HCT116 (cell line): ENCODE measurements at regions of chr7 and their contacts with region 1.

Region 1: GRCh38 chr7:36487756-36488336 is 98.2 kb downstream of the ANLN start:
- DNase-seq: peak; percentile 59
- ATAC-seq: peak; percentile 67
- H3K4me3 ChIP-seq: no peak overlapping the region
- H3K27ac ChIP-seq: no peak overlapping the region
- H3K4me1 ChIP-seq: no peaks in the 10 kb centered on the region
- H3K27me3 ChIP-seq: no peaks in the 10 kb centered on the region
- CTCF ChIP-seq: peak; percentile 70 to 83 (median 82)
- POLR2A ChIP-seq: no peak
- RAD21 ChIP-seq: peak; percentile 93

Region 2: GRCh38 chr7:35584990-35585389 is 902.9 kb before region 1 on chr7:
- CTCF ChIA-PET with region 1: no interaction called
- POLR2A ChIA-PET with region 1: no interaction called
- RAD21 ChIA-PET with region 1: no interaction called
- intact Hi-C with region 1: no loop called
- DNase-seq: no peak
- ATAC-seq: no peak
- H3K4me3 ChIP-seq: no peak overlapping the region
- H3K27ac ChIP-seq: no peak overlapping the region
- H3K4me1 ChIP-seq: no peaks in the 10 kb centered on the region
- H3K27me3 ChIP-seq: no peaks in the 10 kb centered on the region
- CTCF ChIP-seq: no peak
- POLR2A ChIP-seq: no peak
- RAD21 ChIP-seq: no peak

Region 3: DNA sequence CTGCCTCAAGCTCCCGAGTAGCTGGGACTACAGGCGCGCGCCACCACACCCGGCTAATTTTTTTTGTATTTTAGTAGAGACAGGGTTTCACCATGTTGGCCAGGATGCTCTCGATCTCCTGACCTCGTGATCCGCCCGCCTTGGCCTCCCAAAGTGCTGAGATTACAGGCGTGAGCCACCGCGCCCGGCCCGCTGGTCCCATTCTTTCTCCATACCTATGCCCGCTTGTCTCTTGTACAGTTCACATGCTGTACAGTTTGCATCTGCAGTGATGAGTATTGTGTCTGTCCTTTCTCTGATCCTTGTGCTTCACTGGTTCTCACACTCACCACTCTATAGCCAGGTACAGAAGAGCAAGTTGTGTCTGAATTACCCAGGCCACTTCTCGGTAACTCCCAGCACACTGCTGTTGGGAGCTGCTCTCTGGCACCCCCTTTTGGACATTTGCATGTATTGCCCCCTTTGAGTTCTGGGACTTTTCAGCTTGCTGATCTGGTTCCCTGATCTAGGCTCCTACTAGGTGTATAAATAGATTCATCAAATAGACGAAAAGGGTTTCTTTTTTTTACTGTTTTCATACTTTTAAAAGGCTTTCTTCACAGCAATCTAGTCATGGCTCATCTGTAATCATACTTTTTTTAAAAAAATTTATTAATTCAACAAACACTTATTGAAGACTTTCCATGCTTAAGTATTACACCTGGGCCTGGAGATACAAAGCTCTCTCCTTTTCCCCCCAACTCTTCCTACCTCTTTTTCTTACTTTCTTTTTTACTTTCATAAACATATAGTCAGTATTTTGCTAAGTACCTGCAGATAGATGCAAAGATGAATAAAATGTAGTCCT is 183.0 kb after region 1 on chr7:
- CTCF ChIA-PET with region 1: interaction called, 25 read pairs
- POLR2A ChIA-PET with region 1: interaction called, 5 read pairs
- RAD21 ChIA-PET with region 1: interaction called, 6 to 11 read pairs
- intact Hi-C with region 1: loop called (anchors 1 kb)
- DNase-seq: peak; percentile 60
- ATAC-seq: peak; percentile 92
- H3K4me3 ChIP-seq: no peak overlapping the region
- H3K27ac ChIP-seq: no peak overlapping the region
- H3K4me1 ChIP-seq: peaks cover 5 to 21% of the 10 kb centered on the region in 2 experiments
- H3K27me3 ChIP-seq: no peaks in the 10 kb centered on the region
- CTCF ChIP-seq: peak; percentile 75 to 96 (median 91)
- POLR2A ChIP-seq: no peak
- RAD21 ChIP-seq: peak; percentile 84

Region 4: DNA sequence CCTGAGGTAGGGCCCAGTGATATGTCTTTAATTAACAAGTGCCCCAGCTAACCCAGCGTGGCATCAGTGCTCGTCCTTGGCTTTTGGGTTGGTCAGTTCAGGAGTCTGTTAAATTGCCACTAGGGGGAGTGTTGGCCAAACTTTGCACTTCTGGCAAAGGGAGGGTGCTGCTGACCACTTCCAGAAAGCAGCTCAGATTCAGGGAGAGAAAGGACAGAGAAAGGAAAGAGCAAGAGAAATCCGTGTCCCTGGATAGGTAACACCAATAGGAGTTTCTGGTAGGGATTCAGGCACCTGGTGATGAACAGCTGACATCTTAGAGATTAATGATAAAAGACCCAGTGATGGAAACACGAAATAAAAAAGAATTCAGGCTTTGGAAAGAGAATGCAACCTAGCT is 479.5 kb after region 1 on chr7:
- CTCF ChIA-PET with region 1: interaction called, 21 read pairs
- POLR2A ChIA-PET with region 1: no interaction called
- RAD21 ChIA-PET with region 1: interaction called, 6 read pairs
- intact Hi-C with region 1: loop called (anchors 5 kb)
- DNase-seq: peak; percentile 78
- ATAC-seq: peak; percentile 98
- H3K4me3 ChIP-seq: no peak overlapping the region
- H3K27ac ChIP-seq: no peak overlapping the region
- H3K4me1 ChIP-seq: peaks cover 0 to 6% of the 10 kb centered on the region in 2 experiments; a peak in 1 of 4 replicates
- H3K27me3 ChIP-seq: no peaks in the 10 kb centered on the region
- CTCF ChIP-seq: peak; percentile 72 to 86 (median 74); a peak in 5 of 6 replicates
- POLR2A ChIP-seq: no peak
- RAD21 ChIP-seq: peak; percentile 82

Region 5: DNA sequence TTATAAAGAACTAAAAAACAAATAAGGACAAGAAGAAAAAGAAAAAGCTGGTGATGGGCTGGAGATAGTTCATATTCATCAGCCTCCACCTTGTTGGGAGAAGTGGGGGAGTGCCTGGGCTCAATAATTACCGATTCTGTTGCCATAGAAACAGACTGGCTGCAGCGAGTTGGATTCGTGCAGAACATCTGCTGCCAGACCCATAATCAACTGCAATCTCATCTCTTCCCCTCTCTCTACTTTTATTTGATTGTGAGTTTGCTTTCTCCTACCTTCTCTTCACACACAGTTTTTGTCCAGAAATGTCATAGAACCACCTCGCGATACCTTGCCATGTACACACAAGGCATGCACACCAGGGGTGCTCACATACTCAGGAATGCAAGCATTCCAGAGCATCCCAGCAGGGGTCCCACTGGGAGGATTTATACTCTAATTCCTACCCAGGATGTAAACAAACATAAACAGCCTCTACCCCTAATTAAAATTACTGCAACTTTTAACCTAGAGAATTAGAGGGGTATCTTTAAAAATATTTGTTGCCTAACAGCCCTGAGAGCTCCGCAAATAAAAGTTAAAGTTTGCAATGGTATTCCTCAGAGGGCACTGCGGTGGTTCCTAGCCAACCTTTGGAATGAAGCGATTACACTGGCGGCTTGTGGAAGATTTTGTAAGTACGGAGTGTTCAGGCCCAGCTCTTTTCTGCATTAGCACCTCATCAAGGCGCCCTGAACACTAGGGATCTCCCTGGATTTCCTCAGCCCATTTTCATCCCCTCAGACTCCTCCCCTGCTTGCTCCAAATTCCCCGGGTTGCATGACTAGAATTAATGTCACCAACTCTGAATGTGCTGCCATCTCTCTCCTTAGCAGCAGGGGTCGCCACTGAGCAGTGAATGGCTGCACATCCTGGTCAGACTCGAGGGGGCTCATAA is 498.9 kb after region 1 on chr7:
- CTCF ChIA-PET with region 1: interaction called, 5 read pairs
- POLR2A ChIA-PET with region 1: no interaction called
- RAD21 ChIA-PET with region 1: no interaction called
- intact Hi-C with region 1: loop called (anchors 5 kb)
- DNase-seq: peak; percentile 34
- ATAC-seq: peak; percentile 94
- H3K4me3 ChIP-seq: no peak overlapping the region
- H3K27ac ChIP-seq: no peak overlapping the region
- H3K4me1 ChIP-seq: peaks cover 4 to 7% of the 10 kb centered on the region in 2 experiments; a peak in 3 of 4 replicates
- H3K27me3 ChIP-seq: no peaks in the 10 kb centered on the region
- CTCF ChIP-seq: peak; percentile 68 to 95 (median 89)
- POLR2A ChIP-seq: no peak
- RAD21 ChIP-seq: peak; percentile 79

Region 6: DNA sequence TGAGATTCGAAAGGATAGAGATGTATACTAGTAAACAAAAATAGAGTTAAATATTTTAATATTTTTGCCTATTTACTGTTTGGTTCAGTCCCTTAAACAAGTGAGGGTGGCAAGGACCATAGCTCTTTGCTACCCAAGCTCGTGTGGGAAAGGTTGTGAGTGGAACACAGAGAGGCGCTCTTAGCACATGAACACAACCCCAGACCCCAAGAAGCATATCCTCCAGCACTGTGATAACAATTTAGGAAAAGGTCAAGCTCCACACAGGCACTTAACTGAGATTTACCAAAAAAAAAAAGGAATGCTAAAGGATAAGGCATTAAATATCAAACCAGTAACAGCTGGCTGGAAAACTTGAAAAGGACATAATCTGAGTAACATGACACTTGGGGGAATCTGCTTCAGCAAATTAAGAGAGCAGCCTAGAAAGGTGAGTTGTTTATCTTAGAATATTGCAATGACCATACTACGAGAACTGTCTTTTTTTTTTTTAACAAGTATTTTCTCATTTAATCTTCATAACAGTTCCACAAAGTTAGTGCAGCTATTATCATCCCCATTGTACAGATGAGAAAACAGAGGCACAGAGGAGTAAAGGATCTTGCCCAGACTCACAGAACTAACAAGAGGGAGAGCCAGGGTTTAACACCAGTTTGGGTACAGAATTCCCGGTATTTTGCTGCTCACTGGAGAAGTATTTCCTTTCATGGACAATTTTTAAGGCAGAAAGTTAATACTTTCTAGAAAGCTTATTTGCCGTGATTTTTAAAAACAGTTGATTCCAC is 539.9 kb after region 1 on chr7:
- CTCF ChIA-PET with region 1: interaction called, 4 read pairs
- POLR2A ChIA-PET with region 1: no interaction called
- RAD21 ChIA-PET with region 1: no interaction called
- intact Hi-C with region 1: loop called (anchors 5 kb)
- DNase-seq: peak; percentile 6
- ATAC-seq: no peak
- H3K4me3 ChIP-seq: no peak overlapping the region
- H3K27ac ChIP-seq: no peak overlapping the region
- H3K4me1 ChIP-seq: peaks cover 31 to 43% of the 10 kb centered on the region in 2 experiments
- H3K27me3 ChIP-seq: no peaks in the 10 kb centered on the region
- CTCF ChIP-seq: peak in 1 of 3 experiments; percentile 21; a peak in 1 of 6 replicates
- POLR2A ChIP-seq: no peak
- RAD21 ChIP-seq: peak; percentile 59

Region 7: DNA sequence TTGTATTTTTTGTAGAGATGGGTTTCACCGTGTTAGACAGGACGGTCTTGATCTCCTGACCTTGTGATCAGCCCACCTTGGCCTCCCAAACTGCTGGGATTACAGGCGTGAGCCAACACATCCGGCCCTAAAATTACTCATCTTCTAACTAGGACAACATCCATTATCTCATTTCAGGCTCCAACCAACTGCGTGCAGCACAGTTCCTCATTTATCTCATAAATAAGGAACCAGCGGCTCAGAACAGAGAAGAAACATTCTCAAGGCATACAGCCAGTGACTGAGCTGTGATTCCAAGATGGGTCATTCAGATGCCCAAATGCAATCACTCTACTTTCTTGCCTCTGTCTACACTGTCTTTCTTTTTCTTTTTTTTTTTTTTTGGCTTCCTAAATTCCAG is 604.7 kb after region 1 on chr7:
- CTCF ChIA-PET with region 1: no interaction called
- POLR2A ChIA-PET with region 1: no interaction called
- RAD21 ChIA-PET with region 1: no interaction called
- intact Hi-C with region 1: no loop called
- DNase-seq: no peak
- ATAC-seq: no peak
- H3K4me3 ChIP-seq: no peak overlapping the region
- H3K27ac ChIP-seq: no peak overlapping the region
- H3K4me1 ChIP-seq: 0 out of 4 replicates have a peak, but pooled peaks cover 0 to 4% of the 10 kb centered on the region in 2 experiments
- H3K27me3 ChIP-seq: no peaks in the 10 kb centered on the region
- CTCF ChIP-seq: no peak
- POLR2A ChIP-seq: no peak
- RAD21 ChIP-seq: no peak